HepG2 (cell line): ENCODE measurements at regions of chr3 and their contacts with region 1.

Region 1: DNA sequence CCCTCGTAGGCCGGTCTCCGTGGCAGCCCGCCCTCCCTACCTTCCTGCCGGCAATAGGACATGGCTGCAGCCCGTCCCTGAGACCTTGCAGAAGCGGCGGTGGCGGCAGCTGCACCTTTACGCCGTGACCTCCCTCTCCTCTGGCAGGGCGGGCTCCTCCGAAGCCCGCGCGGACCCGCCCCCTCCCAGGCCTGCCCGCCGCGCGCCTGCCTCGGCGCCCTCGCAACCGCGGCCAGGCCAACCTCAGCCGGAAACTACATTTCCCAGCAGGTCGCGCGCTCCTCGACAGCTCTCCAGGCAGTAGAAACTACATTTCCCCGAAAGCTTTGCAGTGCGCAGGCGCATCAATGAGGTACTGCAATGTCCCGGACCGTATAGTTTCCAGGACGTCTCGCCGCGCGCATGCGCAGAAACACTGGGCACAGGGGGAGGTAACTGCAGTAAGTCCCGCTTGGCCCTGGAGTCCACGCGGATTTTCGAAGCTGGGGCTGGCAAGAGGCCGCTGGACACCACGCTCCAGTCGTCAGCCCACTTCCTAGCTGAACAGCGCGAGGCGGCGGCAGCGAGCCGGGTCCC is at the starts of genes CHCHD4 and TMEM43:
- DNase-seq: peak; percentile 99
- ATAC-seq: peak; percentile 86
- H3K4me3 ChIP-seq: peak within 1 kb of the TSS; percentile 80 to 95 (median 88)
- H3K27ac ChIP-seq: peak within 1 kb of the TSS; percentile 95
- H3K4me1 ChIP-seq: peaks cover 53% of the 10 kb centered on the region
- H3K27me3 ChIP-seq: no peaks in the 10 kb centered on the region; a peak in 1 of 5 replicates
- CTCF ChIP-seq: no peak
- EP300 ChIP-seq: no peak; a peak in 1 of 4 replicates
- POLR2A ChIP-seq: peak; percentile 78
- RAD21 ChIP-seq: no peak
- total RNA-seq, gene CHCHD4: 24.1 and 32.0 TPM in 2 replicates
- total RNA-seq, gene TMEM43: 25.9 and 50.5 TPM in 2 replicates

Region 2: DNA sequence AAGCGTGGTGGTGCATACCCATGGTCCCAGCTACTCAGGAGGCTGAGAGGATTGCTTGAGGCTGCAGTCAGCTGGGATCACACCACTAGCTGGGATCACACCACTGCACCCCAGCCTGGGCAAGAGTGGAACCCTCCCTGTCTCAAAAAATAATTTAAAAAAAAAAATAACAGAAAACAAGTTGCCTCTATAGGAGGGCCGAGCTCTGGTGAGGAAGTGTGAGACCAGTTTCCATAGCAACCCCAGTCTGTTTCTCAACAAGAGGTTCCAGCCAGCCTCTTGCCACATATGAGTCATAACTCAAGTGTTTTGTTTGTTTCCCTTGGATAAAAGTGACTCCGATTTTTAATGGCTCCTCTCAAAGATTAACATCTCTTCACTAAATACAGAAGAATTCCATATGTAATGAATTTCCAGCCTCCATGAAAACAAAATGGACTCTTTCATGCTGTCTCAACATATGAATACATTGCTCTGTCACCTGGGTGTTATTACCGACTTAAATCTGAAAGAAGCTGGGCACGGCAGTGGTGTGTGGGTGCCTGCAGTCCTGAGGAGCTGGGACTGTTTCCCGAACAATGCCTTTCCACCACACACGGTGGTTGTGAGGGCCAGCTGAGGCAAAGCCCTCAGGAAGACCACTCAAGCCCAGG is 19.8 kb after region 1 on chr3:
- CTCF ChIA-PET with region 1: no interaction called
- POLR2A ChIA-PET with region 1: interaction called, 30 read pairs
- in situ Hi-C with region 1: no loop called
- intact Hi-C with region 1: no loop called
- DNase-seq: peak; percentile 96
- ATAC-seq: peak; percentile 71
- H3K4me3 ChIP-seq: peak overlapping the region in 1 of 3 experiments; percentile 11; a peak in 1 of 6 replicates
- H3K27ac ChIP-seq: peak overlapping the region; percentile 96
- H3K4me1 ChIP-seq: peaks cover 20% of the 10 kb centered on the region
- H3K27me3 ChIP-seq: no peaks in the 10 kb centered on the region
- CTCF ChIP-seq: no peak
- EP300 ChIP-seq: peak in 1 of 2 experiments; percentile 64; a peak in 2 of 4 replicates
- POLR2A ChIP-seq: no peak
- RAD21 ChIP-seq: no peak